Adrenal gland (tissue), 19 donors: ENCODE measurements at regions of chr3 and their contacts with region 1.

Region 1: DNA sequence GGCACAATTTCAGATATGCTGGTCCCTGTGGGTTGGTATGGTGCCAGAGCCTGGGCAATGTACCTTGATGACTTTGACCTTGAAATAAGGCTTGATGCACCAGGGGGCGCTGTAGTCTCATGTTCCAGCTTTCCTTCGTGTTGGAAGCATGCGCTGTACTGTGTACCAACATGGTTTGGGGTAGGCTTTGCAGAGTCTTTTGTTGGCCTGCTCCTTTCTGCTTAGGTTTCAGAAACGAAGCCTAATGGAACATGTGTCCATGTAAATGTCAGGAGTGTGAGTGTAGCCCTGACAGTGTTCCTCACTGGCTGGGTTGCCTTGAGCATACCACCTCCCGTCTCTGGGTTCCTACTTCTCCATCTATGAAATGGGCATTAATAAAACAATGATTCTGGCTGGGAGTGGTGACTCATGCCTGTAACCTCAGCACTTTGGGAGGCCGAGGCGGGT is 3.6 kb upstream of the CCR4 start:
- DNase-seq: peak; percentile 79 to 96 (median 85)
- H3K4me3 ChIP-seq: no peak overlapping the region
- H3K27ac ChIP-seq: no peak overlapping the region
- H3K4me1 ChIP-seq: no peaks in the 10 kb centered on the region
- H3K27me3 ChIP-seq: no peaks in the 10 kb centered on the region
- CTCF ChIP-seq: peak; percentile 61 to 89 (median 83)
- POLR2A ChIP-seq: no peak

Region 2: GRCh38 chr3:33074217-33075067 is 126.6 kb after region 1 on chr3:
- intact Hi-C with region 1: loop called (anchors 2 to 5 kb)
- DNase-seq: peak; percentile 41 to 86 (median 70)
- H3K4me3 ChIP-seq: no peak overlapping the region
- H3K27ac ChIP-seq: no peak overlapping the region
- H3K4me1 ChIP-seq: peaks cover 11 to 12% of the 10 kb centered on the region in 2 donors
- H3K27me3 ChIP-seq: no peaks in the 10 kb centered on the region
- CTCF ChIP-seq: peak; percentile 63 to 85 (median 82)
- POLR2A ChIP-seq: no peak

Region 3: GRCh38 chr3:33260104-33260503 is 312.3 kb after region 1 on chr3:
- intact Hi-C with region 1: no loop called
- DNase-seq: no peak
- H3K4me3 ChIP-seq: no peak overlapping the region
- H3K27ac ChIP-seq: no peak overlapping the region
- H3K4me1 ChIP-seq: no peaks in the 10 kb centered on the region
- H3K27me3 ChIP-seq: no peaks in the 10 kb centered on the region
- CTCF ChIP-seq: no peak
- POLR2A ChIP-seq: no peak

Region 4: DNA sequence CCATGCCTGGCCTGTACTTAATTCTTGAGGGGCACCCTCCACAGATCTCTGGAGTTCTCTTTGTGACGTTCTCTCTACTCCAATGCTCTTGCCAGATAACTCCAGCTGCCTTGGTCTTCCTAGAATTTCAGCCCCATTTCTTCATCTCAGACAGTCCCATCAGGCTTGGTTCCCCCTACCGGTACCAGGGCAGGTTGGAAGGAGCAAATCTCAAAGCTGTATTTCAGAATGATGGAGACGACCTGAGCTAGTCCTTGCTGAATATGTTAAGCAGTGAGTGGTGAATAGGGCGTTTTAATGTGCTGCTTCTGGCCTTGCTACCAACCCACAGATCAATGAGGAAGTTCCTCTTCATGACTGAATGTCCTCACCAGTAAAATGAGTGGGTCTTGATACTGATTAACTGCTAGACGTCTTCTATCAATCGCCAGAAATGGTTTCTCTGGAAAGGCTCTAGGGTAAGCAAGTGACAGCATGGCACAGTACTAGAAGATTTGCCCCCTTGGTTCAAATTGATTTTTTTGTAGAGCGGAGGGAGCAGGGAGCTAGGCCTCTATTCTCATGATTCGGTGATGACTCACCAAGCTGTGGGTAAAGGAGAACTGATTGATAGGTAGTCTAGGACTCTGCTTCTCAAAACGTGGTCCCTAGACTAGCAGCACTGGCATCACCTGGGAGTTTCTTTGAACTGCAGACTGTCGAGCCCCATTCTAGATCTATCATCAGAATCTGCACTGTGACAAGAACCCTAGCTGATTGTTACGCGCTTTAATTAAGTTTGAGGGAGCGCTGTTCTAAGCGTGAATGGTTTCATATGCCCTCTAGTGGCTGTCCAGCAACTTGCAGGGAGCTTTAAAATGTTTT is 424.6 kb after region 1 on chr3:
- intact Hi-C with region 1: loop called in 1 of 2 experiments (anchors 5 kb)
- DNase-seq: peak in 5 of 7 donors; percentile 21 to 75 (median 52)
- H3K4me3 ChIP-seq: peak overlapping the region in 1 of 4 donors; percentile 33
- H3K27ac ChIP-seq: no peak overlapping the region
- H3K4me1 ChIP-seq: no peaks in the 10 kb centered on the region
- H3K27me3 ChIP-seq: no peaks in the 10 kb centered on the region
- CTCF ChIP-seq: peak in 5 of 6 experiments; percentile 83 to 96 (median 90)
- POLR2A ChIP-seq: no peak